ENCODE measurements at regions of chr1 and their contacts with region 1.

Region 1: GRCh38 chr1:59971464-59971911 is 44.9 kb upstream of the CYP2J2 start:
- DNase-seq: peak; percentile 88
- H3K4me3 ChIP-seq: peak overlapping the region; percentile 13 to 42; a peak in 3 of 4 replicates
- H3K27ac ChIP-seq: no peak overlapping the region
- H3K4me1 ChIP-seq: peaks cover 0 to 5% of the 10 kb centered on the region in 2 experiments; a peak in 1 of 4 replicates
- H3K27me3 ChIP-seq: no peaks in the 10 kb centered on the region
- CTCF ChIP-seq: peak; percentile 96
- EP300 ChIP-seq: no peak
- RAD21 ChIP-seq: peak; percentile 93

Region 2: DNA sequence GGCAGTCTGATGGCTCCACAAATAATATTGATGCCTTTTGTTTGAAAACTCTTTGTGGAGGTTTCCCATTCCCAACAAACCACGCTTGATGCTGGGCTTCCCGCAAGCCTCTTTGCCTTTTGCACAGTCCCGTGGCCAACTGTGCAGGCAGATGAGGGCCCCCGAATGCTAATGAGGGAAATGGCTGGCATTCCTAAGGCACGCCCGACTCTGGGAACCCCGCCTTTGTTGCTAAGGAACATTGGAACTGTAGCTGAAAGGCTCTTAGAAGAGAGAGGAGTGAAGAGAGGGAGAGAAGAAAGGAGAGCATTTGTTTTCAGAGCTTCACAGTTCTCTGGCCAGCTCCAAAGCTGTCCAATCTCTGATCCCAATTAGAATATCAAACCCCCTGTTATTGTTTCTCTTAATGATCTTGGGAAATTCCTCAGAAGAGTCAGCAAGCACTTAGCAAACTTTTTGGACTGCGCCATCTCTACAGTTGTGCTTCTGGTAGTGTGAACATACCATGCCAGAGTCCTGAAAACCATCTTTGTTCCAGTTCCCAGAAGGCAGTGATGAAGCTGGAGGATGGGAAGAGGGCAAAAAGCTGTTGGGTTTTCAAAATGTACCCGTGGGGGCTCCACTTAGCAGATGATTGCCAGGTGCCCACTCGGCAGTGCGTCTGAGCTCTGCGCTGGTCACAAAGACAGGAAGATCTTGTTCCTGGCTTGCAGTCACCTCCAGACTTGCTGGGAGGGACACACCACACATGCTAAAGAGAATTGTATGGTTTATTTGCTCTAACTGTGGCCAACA is 15.2 kb after region 1 on chr1:
- CTCF ChIA-PET with region 1: interaction called, 41 read pairs
- POLR2A ChIA-PET with region 1: no interaction called
- DNase-seq: no peak
- H3K4me3 ChIP-seq: no peak overlapping the region
- H3K27ac ChIP-seq: no peak overlapping the region
- H3K4me1 ChIP-seq: peaks cover 0 to 7% of the 10 kb centered on the region in 2 experiments; a peak in 2 of 4 replicates
- H3K27me3 ChIP-seq: no peaks in the 10 kb centered on the region
- CTCF ChIP-seq: no peak
- EP300 ChIP-seq: no peak
- RAD21 ChIP-seq: no peak

Region 3: GRCh38 chr1:60052601-60053000 is 81.1 kb after region 1 on chr1:
- CTCF ChIA-PET with region 1: interaction called, 14 read pairs
- POLR2A ChIA-PET with region 1: no interaction called
- DNase-seq: peak; percentile 56
- H3K4me3 ChIP-seq: no peak overlapping the region; a peak in 1 of 4 replicates
- H3K27ac ChIP-seq: peak overlapping the region in 1 of 2 experiments; percentile 64; a peak in 2 of 4 replicates
- H3K4me1 ChIP-seq: peaks cover 0 to 7% of the 10 kb centered on the region in 2 experiments; a peak in 2 of 4 replicates
- H3K27me3 ChIP-seq: no peaks in the 10 kb centered on the region
- CTCF ChIP-seq: no peak
- EP300 ChIP-seq: peak in 1 of 2 experiments; percentile 74; a peak in 2 of 4 replicates
- RAD21 ChIP-seq: peak; percentile 4; the same call in 1 of the 2 replicates

Region 4: DNA sequence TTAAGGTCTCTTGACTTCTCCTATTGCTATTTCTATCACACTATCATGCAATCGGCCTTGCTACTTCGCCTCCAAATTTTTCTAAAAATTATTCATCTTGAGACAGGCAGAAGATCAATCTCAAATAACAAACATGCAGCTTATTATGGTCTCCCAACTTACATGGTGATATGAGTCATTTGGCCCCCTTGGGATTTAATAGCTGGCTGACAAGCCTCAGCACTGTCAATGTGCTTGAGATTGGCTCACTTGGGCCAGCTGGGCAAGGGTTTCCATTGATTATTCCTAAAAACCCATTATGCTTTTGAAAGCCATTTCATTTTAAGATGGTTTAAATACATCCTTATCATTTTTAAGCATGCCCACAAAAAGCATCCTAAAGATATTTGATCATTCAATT is 886.4 kb after region 1 on chr1:
- CTCF ChIA-PET with region 1: interaction called, 10 read pairs
- POLR2A ChIA-PET with region 1: no interaction called
- DNase-seq: no peak
- H3K4me3 ChIP-seq: no peak overlapping the region
- H3K27ac ChIP-seq: peak overlapping the region in 1 of 2 experiments; percentile 23; a peak in 2 of 4 replicates
- H3K4me1 ChIP-seq: peaks cover 8 to 42% of the 10 kb centered on the region in 2 experiments; a peak in 3 of 4 replicates
- H3K27me3 ChIP-seq: no peaks in the 10 kb centered on the region
- CTCF ChIP-seq: no peak
- EP300 ChIP-seq: no peak
- RAD21 ChIP-seq: no peak

Region 5: GRCh38 chr1:61851849-61852669 is 1880.6 kb after region 1 on chr1:
- CTCF ChIA-PET with region 1: interaction called, 20 read pairs
- POLR2A ChIA-PET with region 1: no interaction called
- DNase-seq: peak; percentile 36
- H3K4me3 ChIP-seq: no peak overlapping the region; a peak in 1 of 4 replicates
- H3K27ac ChIP-seq: no peak overlapping the region
- H3K4me1 ChIP-seq: peaks cover 0 to 13% of the 10 kb centered on the region in 2 experiments; a peak in 2 of 4 replicates
- H3K27me3 ChIP-seq: no peaks in the 10 kb centered on the region
- CTCF ChIP-seq: peak; percentile 91
- EP300 ChIP-seq: no peak
- RAD21 ChIP-seq: peak; percentile 93